ENCODE measurements at regions of chr1 and their contacts with region 1.

Region 1: GRCh38 chr1:173420330-173420806 is 56.8 kb upstream of the PRDX6 start:
- DNase-seq: peak; percentile 84
- ATAC-seq: peak; percentile 36
- H3K4me3 ChIP-seq: no peak overlapping the region
- H3K4me3 Mint-ChIP-seq: peak overlapping the region; percentile 44
- H3K27ac ChIP-seq: no peak overlapping the region
- H3K27ac Mint-ChIP-seq: peak overlapping the region; percentile 77
- H3K4me1 ChIP-seq: peaks cover 35 to 44% of the 10 kb centered on the region in 2 donors
- H3K4me1 Mint-ChIP-seq: peaks cover 55% of the 10 kb centered on the region
- H3K27me3 ChIP-seq: no peaks in the 10 kb centered on the region
- H3K27me3 Mint-ChIP-seq: no peaks in the 10 kb centered on the region
- CTCF ChIP-seq: peak; percentile 94

Region 2: GRCh38 chr1:173255214-173255813 is 165.1 kb before region 1 on chr1:
- CTCF ChIA-PET with region 1: interaction called, 6 read pairs
- POLR2A ChIA-PET with region 1: no interaction called
- intact Hi-C with region 1: loop called (anchors 2 kb)
- DNase-seq: peak; percentile 41
- ATAC-seq: no peak
- H3K4me3 ChIP-seq: no peak overlapping the region
- H3K4me3 Mint-ChIP-seq: no peak overlapping the region
- H3K27ac ChIP-seq: no peak overlapping the region
- H3K27ac Mint-ChIP-seq: no peak overlapping the region
- H3K4me1 ChIP-seq: peaks cover 8 to 10% of the 10 kb centered on the region in 2 donors
- H3K4me1 Mint-ChIP-seq: peaks cover 8% of the 10 kb centered on the region
- H3K27me3 ChIP-seq: no peaks in the 10 kb centered on the region
- H3K27me3 Mint-ChIP-seq: no peaks in the 10 kb centered on the region
- CTCF ChIP-seq: peak; percentile 75

Region 3: GRCh38 chr1:173476664-173477285 is 56.4 kb after region 1 on chr1:
- CTCF ChIA-PET with region 1: interaction called, 4 read pairs
- POLR2A ChIA-PET with region 1: interaction called, 15 read pairs
- intact Hi-C with region 1: no loop called
- DNase-seq: peak; percentile 92
- ATAC-seq: peak; percentile 92
- H3K4me3 ChIP-seq: peak overlapping the region; percentile 48 to 96 (median 87)
- H3K4me3 Mint-ChIP-seq: peak overlapping the region; percentile 99
- H3K27ac ChIP-seq: peak overlapping the region; percentile 42 to 82
- H3K27ac Mint-ChIP-seq: peak overlapping the region; percentile 99
- H3K4me1 ChIP-seq: peaks cover 22 to 23% of the 10 kb centered on the region in 2 donors
- H3K4me1 Mint-ChIP-seq: peaks cover 42% of the 10 kb centered on the region
- H3K27me3 ChIP-seq: no peaks in the 10 kb centered on the region
- H3K27me3 Mint-ChIP-seq: no peaks in the 10 kb centered on the region
- CTCF ChIP-seq: no peak

Region 4: DNA sequence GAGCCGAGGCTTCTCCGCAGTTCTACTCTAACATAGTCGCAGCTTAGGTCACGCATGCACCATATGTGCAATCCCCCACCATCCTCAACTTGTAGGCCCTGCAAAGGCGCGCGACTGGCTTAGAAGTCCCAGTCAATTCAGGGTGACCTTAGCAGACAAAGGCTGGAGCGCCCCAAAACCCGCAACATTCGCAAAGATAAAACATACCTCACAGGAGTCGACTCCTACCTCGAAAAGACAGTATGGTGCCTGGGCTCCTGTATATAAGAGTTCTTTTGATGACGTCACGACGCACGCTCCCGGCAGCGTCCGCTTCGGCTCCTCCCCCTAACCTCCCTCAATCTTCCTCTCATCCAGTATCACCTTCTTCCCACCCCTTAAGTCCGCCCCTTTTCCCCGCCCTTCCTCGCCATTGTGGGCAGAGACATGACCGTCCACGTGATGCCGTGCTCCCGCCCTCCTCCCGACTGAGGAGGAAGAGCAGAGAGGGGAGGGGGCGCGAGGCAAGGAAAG is 447.4 kb after region 1 on chr1 and contains the start of gene GAS5:
- CTCF ChIA-PET with region 1: interaction called, 5 read pairs
- POLR2A ChIA-PET with region 1: interaction called, 10 read pairs
- intact Hi-C with region 1: loop called (anchors 2 kb)
- DNase-seq: peak; percentile 99
- ATAC-seq: peak; percentile 77
- H3K4me3 ChIP-seq: peak within 1 kb of the TSS; percentile 70 to 98 (median 89)
- H3K4me3 Mint-ChIP-seq: peak within 1 kb of the TSS; percentile 94
- H3K27ac ChIP-seq: peak within 1 kb of the TSS; percentile 90 to 93
- H3K27ac Mint-ChIP-seq: peak within 1 kb of the TSS; percentile 98
- H3K4me1 ChIP-seq: peaks cover 42 to 50% of the 10 kb centered on the region in 2 donors
- H3K4me1 Mint-ChIP-seq: peaks cover 70% of the 10 kb centered on the region
- H3K27me3 ChIP-seq: no peaks in the 10 kb centered on the region
- H3K27me3 Mint-ChIP-seq: no peaks in the 10 kb centered on the region
- CTCF ChIP-seq: no peak
- total RNA-seq, gene GAS5: 590 and 622 TPM in 2 replicates

Region 5: GRCh38 chr1:174743654-174744561 is 1323.5 kb after region 1 on chr1:
- CTCF ChIA-PET with region 1: interaction called, 3 read pairs
- POLR2A ChIA-PET with region 1: no interaction called
- intact Hi-C with region 1: loop called (anchors 2 kb)
- DNase-seq: peak; percentile 65
- ATAC-seq: peak; percentile 57
- H3K4me3 ChIP-seq: no peak overlapping the region
- H3K4me3 Mint-ChIP-seq: no peak overlapping the region
- H3K27ac ChIP-seq: no peak overlapping the region
- H3K27ac Mint-ChIP-seq: no peak overlapping the region
- H3K4me1 ChIP-seq: peaks cover 0 to 10% of the 10 kb centered on the region in 2 donors
- H3K4me1 Mint-ChIP-seq: peaks cover 36% of the 10 kb centered on the region
- H3K27me3 ChIP-seq: no peaks in the 10 kb centered on the region
- H3K27me3 Mint-ChIP-seq: no peaks in the 10 kb centered on the region
- CTCF ChIP-seq: peak; percentile 84